Dorsolateral prefrontal cortex (tissue), 120 donors: ENCODE measurements at regions of chr4 and their contacts with region 1.

Region 1: GRCh38 chr4:111854494-111855087 is 290.7 kb upstream of the FAM241A start:
- DNase-seq: peak in 2 of 10 donors; percentile 4 to 22
- H3K4me3 ChIP-seq: no peak overlapping the region
- H3K27ac ChIP-seq: no peak overlapping the region
- H3K27me3 ChIP-seq: peaks cover 0 to 9% (median 0%) of the 10 kb centered on the region in 45 donors
- CTCF ChIP-seq: peak; percentile 56 to 90 (median 77)

Region 2: GRCh38 chr4:111641955-111642579 is 212.5 kb before region 1 on chr4:
- intact Hi-C with region 1: loop called (anchors 2 to 5 kb)
- DNase-seq: peak in 9 of 10 donors; percentile 9 to 78 (median 50)
- H3K4me3 ChIP-seq: no peak overlapping the region
- H3K27ac ChIP-seq: no peak overlapping the region
- H3K27me3 ChIP-seq: peaks cover 0 to 11% (median 0%) of the 10 kb centered on the region in 45 donors
- CTCF ChIP-seq: peak; percentile 68 to 99 (median 95)

Region 3: DNA sequence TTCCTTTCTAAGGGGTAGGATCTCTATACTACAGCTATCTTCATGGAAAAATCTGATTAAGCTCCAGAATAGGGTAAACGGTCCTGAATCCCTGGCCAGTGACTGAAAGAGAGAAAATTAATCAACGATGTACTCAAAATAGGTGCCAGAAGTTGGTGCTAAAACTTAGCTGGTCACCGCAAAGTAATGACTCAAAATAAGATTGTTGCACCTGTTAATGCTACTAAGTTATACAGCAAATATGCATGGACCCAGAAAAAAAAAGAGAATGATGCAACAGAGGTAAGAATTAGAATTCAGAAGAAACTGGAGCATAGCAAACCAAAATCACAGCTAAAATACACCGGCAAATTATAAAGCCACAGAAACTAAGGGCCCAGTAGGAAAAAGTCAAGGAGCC is 50.9 kb after region 1 on chr4:
- intact Hi-C with region 1: no loop called
- DNase-seq: no peak
- H3K4me3 ChIP-seq: no peak overlapping the region
- H3K27ac ChIP-seq: no peak overlapping the region
- H3K27me3 ChIP-seq: no peaks in the 10 kb centered on the region
- CTCF ChIP-seq: no peak

Region 4: GRCh38 chr4:111943795-111944203 is 89.2 kb after region 1 on chr4:
- intact Hi-C with region 1: no loop called
- DNase-seq: no peak
- H3K4me3 ChIP-seq: no peak overlapping the region
- H3K27ac ChIP-seq: no peak overlapping the region
- H3K27me3 ChIP-seq: peaks cover 0 to 7% (median 0%) of the 10 kb centered on the region in 45 donors
- CTCF ChIP-seq: peak in 5 of 56 donors; percentile 9 to 16 (median 10)